Heart right ventricle (tissue), 16 donors: ENCODE measurements at regions of chr4 and their contacts with region 1.

Region 1: DNA sequence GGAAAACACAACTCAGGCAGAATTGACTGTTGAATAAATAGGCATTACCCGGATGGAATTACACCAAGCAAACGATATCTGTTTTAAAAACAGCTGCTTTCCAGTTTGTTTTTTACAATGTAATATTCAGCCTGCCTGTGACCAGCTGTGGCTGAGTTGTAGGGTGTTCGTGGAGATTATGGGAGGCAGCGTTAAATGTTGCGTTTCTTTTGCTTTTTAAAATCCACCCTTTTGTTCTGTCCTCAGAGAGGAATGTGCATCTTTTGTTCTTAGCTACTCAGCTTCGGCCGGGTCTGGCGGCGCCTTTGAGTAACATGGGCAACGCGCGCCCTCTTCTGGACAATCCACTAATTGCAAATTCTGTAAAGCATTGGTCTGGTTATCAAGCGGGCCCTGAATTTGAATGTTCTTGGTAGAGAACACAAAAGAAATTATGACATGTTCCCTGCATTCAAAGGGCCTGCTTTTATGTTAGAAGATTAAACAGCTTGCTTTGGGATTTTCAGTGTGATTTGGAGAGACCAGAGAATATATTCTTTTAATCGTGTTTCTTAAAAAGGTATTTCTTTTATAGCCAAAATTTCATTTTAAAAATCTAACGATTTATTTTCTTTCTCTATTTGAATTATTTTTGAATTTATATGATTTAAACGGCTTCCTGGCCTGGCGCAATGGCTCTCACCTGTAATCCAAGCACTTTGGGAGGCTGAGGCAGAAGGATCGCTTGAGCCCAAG is 76.3 kb upstream of the TRIM2 start:
- DNase-seq: peak; percentile 54 to 84
- ATAC-seq: peak; percentile 61 to 91 (median 86)
- H3K4me3 ChIP-seq: peak overlapping the region in 1 of 10 donors; percentile 3
- H3K27ac ChIP-seq: no peak overlapping the region
- H3K4me1 ChIP-seq: peaks cover 0 to 5% (median 0%) of the 10 kb centered on the region in 9 donors
- H3K27me3 ChIP-seq: peaks cover 0 to 8% (median 0%) of the 10 kb centered on the region in 7 donors
- CTCF ChIP-seq: peak; percentile 70 to 94 (median 89)

Region 2: DNA sequence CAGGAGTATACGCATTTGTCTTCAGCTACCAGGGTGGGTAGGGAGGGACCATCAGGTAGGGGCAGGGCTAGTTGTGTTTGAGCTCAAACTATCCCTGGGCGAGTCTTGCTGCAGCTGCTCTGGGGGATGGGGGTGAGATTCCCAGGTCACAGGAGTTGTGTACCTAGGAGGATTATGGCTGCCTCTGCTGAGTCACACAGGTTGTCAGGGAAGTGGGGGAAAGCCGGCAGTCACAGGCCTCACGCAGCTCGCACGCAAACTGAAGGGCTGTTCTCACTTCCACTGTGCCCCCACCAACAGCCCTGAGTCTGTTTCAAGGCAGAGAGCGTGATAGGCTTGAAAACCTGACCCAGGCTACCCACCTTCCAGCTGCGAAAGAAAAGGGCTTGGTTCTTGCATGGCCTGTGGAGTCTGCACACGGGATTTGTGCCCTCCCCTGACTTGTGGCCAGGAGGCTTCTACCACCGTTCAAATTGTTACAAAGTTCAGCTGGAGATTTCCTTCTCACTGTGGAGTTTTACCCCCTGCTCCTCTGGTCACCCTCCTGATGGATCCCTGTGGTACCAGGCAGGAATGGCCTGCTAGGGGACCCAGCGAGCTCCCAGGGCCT is 284.3 kb before region 1 on chr4:
- intact Hi-C with region 1: loop called in 9 of 10 experiments (anchors 2 to 5 kb)
- DNase-seq: no peak
- ATAC-seq: no peak
- H3K4me3 ChIP-seq: no peak overlapping the region
- H3K27ac ChIP-seq: no peak overlapping the region
- H3K4me1 ChIP-seq: peaks cover 0 to 6% (median 0%) of the 10 kb centered on the region in 9 donors
- H3K27me3 ChIP-seq: no peaks in the 10 kb centered on the region
- CTCF ChIP-seq: no peak

Region 3: DNA sequence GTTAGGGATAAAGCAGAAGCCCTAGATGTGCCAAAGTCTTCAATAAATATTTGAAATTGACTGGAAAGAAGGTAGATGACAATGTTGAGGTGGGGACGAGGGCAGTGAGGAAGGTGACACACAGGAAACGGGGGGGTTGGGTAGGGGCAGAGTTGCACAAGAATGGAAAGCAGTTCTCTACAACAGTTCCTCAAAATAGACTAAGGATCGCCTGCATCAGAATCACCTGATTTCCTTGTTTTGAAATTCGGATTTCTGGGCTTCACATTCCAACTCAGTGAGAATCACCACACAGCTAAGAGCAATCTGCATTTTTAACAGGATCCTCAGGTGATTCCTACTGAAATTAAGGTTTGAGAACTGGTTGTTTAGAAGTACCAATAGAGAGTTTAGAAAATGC is 277.6 kb before region 1 on chr4:
- intact Hi-C with region 1: loop called in 9 of 10 experiments (anchors 2 to 5 kb)
- DNase-seq: peak in 1 of 2 donors; percentile 31
- ATAC-seq: peak; percentile 62 to 95 (median 85)
- H3K4me3 ChIP-seq: no peak overlapping the region
- H3K27ac ChIP-seq: peak overlapping the region in 6 of 10 donors; percentile 2 to 70 (median 23)
- H3K4me1 ChIP-seq: peaks cover 0 to 20% (median 17%) of the 10 kb centered on the region in 9 donors
- H3K27me3 ChIP-seq: no peaks in the 10 kb centered on the region
- CTCF ChIP-seq: no peak

Region 4: DNA sequence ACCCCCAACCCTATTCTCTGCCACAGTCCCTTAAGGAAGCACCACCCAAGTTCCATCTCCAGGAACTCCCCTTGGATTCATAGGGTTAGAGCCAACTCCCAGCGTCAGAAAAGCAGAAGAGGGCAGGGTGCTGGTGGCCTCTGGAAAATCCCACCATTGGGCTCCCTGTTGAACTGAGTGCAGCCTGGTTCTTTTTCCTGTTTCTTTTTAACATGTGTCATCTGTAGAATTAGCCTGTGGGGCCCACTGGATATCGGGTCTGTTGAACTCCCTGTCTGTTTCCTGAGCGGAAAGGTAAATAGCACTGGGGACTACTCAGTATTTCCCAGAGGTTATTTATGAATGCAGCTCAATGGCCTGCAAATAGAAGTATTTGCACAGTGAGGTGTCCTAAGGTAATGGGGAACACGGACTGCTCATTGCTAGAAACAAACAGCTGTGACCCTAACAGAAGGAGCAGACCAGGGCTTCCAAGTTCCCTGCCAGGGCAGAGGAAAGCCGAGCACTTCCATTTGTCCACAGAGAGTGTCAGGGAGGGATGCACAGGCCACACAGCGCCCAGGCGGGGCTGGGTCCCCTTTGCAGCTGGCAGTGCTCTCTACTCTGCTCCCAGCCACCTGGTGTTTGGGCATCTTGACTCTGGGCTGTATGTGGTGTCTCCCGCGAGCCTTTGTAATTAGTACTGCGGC is 89.2 kb before region 1 on chr4:
- intact Hi-C with region 1: no loop called
- DNase-seq: no peak
- ATAC-seq: no peak
- H3K4me3 ChIP-seq: no peak overlapping the region
- H3K27ac ChIP-seq: no peak overlapping the region
- H3K4me1 ChIP-seq: no peaks in the 10 kb centered on the region
- H3K27me3 ChIP-seq: peaks cover 0 to 11% (median 0%) of the 10 kb centered on the region in 7 donors
- CTCF ChIP-seq: no peak

Region 5: DNA sequence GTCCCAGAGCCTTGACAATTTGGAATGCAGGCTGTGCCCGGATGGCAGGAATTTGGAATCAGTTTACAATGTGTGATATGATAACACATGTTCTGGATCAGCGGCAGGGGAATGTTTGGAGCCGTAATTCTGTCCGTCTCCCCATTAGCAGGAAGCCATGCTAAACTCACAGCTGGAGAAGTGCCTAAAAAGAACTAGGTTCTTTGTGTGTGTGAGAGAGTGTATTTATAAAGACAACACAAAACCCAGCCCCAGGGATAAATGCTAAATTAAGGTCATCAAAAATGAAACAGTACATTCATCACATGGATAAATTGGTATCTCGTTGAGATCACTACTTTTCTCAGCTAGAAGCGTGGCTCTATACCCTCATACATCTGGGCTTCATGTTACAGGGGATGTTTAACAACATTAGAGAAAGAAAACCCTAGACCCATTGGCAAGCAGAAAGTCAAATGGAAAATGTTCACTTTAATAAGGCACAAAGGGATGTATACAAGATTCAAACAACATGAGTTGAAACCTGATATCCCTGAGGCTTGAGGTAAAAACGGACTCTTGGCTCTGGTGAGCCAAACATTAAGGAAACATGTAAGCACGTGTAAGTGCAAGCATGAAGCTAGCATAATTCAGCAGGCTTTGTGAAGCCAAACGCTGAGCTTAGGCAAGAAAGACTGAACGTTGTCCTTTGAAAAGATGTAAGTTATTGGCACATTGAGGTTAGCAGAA is 320.2 kb after region 1 on chr4:
- intact Hi-C with region 1: no loop called
- DNase-seq: no peak
- ATAC-seq: peak in 1 of 8 donors; percentile 30
- H3K4me3 ChIP-seq: peak overlapping the region in 5 of 10 donors; percentile 11 to 23 (median 13)
- H3K27ac ChIP-seq: peak overlapping the region in 3 of 10 donors; percentile 1 to 41 (median 17)
- H3K4me1 ChIP-seq: peaks cover 0 to 35% (median 18%) of the 10 kb centered on the region in 9 donors
- H3K27me3 ChIP-seq: no peaks in the 10 kb centered on the region
- CTCF ChIP-seq: no peak